K562 (cell line): ENCODE measurements at regions of chr1 and their contacts with region 1.

Region 1: DNA sequence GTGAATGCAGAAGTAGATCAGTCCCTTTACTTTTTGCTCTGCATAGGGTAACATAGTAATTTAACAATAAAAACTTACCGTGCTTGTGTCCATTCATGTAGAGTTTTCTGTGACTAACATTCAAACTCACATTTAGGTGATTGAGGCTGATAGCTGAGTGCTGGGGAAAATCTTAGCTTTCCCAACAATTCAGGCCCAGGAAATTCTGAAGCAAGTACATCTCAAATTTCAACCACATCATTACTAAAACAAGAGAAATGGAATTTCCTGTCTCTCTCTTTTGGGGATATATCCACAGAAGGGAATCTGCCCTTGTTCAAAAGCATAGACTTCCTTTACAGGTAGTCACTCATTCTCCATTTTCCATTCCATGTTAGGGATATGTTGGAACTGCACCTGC is 33.1 kb upstream of the C1orf146 start:
- DNase-seq: no peak
- ATAC-seq: no peak
- H3K4me3 ChIP-seq: no peak overlapping the region
- H3K27ac ChIP-seq: no peak overlapping the region
- H3K4me1 ChIP-seq: no peaks in the 10 kb centered on the region
- H3K27me3 ChIP-seq: peaks cover 2 to 4% of the 10 kb centered on the region in 2 experiments; a peak in 3 of 5 replicates
- CTCF ChIP-seq: no peak
- EP300 ChIP-seq: no peak
- POLR2A ChIP-seq: no peak
- RAD21 ChIP-seq: no peak

Region 2: GRCh38 chr1:91997607-91998195 is 186.9 kb before region 1 on chr1:
- CTCF ChIA-PET with region 1: no interaction called
- POLR2A ChIA-PET with region 1: no interaction called
- in situ Hi-C with region 1: no loop called
- intact Hi-C with region 1: loop called (anchors 10 kb)
- DNase-seq: peak in 1 of 4 experiments; percentile 43
- ATAC-seq: no peak
- H3K4me3 ChIP-seq: no peak overlapping the region
- H3K27ac ChIP-seq: no peak overlapping the region
- H3K4me1 ChIP-seq: no peaks in the 10 kb centered on the region
- H3K27me3 ChIP-seq: peaks cover 2 to 4% of the 10 kb centered on the region in 2 experiments; a peak in 1 of 5 replicates
- CTCF ChIP-seq: peak; percentile 24 to 69 (median 28); a peak in 3 of 6 replicates
- EP300 ChIP-seq: no peak
- POLR2A ChIP-seq: no peak
- RAD21 ChIP-seq: peak; percentile 73 to 83